GM18951 (cell line): ENCODE measurements at regions of chr17 and their contacts with region 1.

Region 1: GRCh38 chr17:64129764-64130558 is at the start of gene ERN1:
- POLR2A ChIP-seq: peak; percentile 100

Region 2: GRCh38 chr17:64025732-64026294 is 104.1 kb before region 1 on chr17:
- in situ Hi-C with region 1: no loop called
- POLR2A ChIP-seq: no peak

Region 3: DNA sequence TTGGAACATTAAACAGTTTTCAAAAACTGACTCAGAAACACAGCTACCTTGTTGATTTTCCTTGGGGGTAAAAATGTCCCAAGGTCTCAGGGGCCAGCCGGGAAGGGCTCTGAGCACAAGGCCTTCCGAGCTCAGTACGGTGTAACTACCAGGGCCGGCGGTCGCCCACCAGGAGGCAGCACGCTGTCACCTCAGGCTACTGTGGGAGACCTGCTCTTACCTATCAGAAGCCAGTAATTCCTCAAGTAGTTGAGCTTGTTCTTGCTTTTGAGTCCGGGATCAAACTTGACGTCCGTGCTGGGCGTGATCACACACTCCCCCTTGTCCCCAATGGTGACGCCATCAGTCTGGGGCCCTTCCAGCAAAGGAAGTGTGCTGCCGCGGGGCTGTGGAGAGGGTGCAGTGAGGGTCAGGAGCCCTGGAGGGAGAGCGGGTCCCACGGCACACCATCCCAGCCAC is 66.2 kb before region 1 on chr17:
- in situ Hi-C with region 1: loop called (anchors 10 kb)
- POLR2A ChIP-seq: no peak

Region 4: DNA sequence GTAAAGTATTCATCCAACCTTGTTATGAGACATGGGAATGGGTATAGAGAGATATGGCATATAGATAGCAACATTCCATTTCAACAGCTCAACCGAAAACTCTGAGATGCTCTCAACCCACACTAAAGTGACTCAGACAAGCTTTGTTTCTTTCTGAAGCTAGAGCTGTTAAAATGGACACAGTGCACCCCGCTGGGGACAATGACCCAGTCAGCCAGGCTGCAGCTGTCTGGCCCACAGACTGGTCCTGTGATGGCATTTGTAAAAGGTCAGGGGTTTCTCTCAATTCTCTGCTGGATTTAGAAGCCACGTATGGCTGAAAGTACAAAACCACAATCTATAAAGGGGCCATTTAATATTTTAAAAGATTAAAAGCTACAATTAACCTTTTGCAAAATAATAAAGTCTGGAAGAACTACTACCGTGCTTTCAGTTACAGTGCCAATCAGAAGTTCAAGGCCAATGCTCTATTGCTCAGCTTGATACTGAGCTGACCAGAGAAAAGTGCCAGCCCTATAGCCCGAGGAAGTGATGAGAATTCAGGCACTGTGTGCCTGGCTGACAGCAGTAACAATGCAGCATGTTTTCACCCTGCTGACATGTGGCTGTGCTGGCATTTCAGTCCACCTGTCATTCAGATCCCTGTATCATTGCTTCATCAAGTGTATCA is 72.8 kb after region 1 on chr17:
- in situ Hi-C with region 1: no loop called
- POLR2A ChIP-seq: no peak